GM12878 (cell line): ENCODE measurements at regions of chr5 and their contacts with region 1.

Region 1: DNA sequence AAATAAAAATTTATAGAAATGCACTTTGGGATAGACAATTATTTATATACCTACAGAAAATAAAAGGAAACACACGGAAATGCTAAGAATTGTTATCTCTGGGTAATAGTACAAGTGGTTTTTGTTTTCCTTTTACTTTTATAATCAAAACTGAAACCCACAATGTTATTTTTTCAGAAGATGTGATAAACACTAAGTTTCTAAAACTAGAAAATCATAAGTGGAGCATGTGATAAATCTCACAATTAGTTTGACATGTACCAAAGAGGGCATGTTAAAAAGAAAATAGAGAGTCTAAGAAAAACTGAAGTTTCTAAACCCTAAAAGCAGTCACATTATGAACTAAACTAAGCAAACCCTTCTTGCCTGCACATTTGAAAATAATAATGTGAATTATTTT is 61.1 kb downstream of the OXCT1 start:
- DNase-seq: peak; percentile 11
- ATAC-seq: peak; percentile 64
- H3K4me3 ChIP-seq: peak overlapping the region; percentile 13; the same call in 1 of the 2 replicates
- H3K27ac ChIP-seq: 0 out of 2 replicates have a peak overlapping the region, but pooled peaks have one; percentile 8
- H3K4me1 ChIP-seq: no peaks in the 10 kb centered on the region
- H3K27me3 ChIP-seq: no peaks in the 10 kb centered on the region
- CTCF ChIP-seq: no peak
- EP300 ChIP-seq: no peak
- POLR2A ChIP-seq: no peak
- RAD21 ChIP-seq: no peak

Region 2: GRCh38 chr5:41794473-41794872 is 14.7 kb before region 1 on chr5:
- CTCF ChIA-PET with region 1: interaction called, 6 read pairs
- POLR2A ChIA-PET with region 1: interaction called, 3 read pairs
- RAD21 ChIA-PET with region 1: no interaction called
- SMC1A ChIA-PET with region 1: interaction called, 11 read pairs
- in situ Hi-C with region 1: no loop called
- intact Hi-C with region 1: no loop called
- DNase-seq: no peak
- ATAC-seq: no peak
- H3K4me3 ChIP-seq: no peak overlapping the region
- H3K27ac ChIP-seq: no peak overlapping the region
- H3K4me1 ChIP-seq: no peaks in the 10 kb centered on the region
- H3K27me3 ChIP-seq: no peaks in the 10 kb centered on the region
- CTCF ChIP-seq: no peak
- EP300 ChIP-seq: no peak
- POLR2A ChIP-seq: no peak
- RAD21 ChIP-seq: no peak